ENCODE measurements at regions of chr2 and their contacts with region 1.

Region 1: DNA sequence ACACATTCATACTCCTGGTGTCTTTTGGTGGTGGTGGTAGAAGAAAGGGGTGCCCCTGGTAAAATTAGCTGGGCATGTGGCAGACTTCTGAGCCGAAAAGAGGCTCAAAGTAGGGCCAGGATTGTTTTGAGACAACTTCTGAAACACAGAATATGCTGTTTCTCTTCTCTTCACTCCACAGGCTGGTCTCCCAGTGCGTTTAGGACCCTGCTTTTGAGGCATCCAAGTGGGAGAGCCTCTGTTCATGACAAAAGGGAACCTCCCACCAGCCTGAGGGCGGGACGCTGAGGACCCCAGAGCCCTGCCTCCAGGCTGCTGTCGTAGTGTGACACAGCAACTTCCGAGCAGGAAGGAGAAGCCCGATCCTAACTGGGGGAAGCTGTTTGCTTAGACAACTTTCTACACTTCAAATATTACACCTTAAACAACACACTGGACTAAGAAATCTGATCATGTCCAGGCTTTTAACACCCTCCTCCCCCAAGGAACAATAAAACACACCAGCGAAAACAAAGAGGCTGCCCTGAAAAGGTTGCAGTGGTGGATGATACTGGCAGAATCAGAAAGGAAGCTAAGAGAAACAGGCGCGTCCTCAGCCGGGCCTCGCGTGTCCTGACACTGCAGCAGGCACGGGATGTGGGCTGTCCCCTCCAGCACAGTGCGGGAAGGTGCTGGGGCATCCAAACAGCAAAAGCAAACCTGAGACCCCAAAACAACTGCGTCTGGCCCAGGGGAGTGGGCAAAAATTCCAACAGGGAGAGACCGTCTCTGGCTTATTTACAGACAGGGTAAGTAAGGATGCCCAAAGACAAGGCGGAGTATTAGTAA is 9.3 kb downstream of the SERTAD2 start:
- DNase-seq: peak; percentile 77 to 82 (median 80)
- H3K4me3 ChIP-seq: peak overlapping the region; percentile 46
- H3K27ac ChIP-seq: peak overlapping the region; percentile 53 to 88
- H3K4me1 ChIP-seq: peaks cover 23% of the 10 kb centered on the region
- H3K27me3 ChIP-seq: no peaks in the 10 kb centered on the region
- CTCF ChIP-seq: no peak
- EP300 ChIP-seq: no peak
- POLR2A ChIP-seq: peak; percentile 72

Region 2: GRCh38 chr2:64750817-64751285 is 106.5 kb after region 1 on chr2:
- intact Hi-C with region 1: loop called in 1 of 4 experiments (anchors 2 kb)
- DNase-seq: peak; percentile 99
- H3K4me3 ChIP-seq: peak overlapping the region; percentile 74
- H3K27ac ChIP-seq: peak overlapping the region; percentile 74 to 96
- H3K4me1 ChIP-seq: peaks cover 7% of the 10 kb centered on the region
- H3K27me3 ChIP-seq: no peaks in the 10 kb centered on the region
- CTCF ChIP-seq: no peak
- EP300 ChIP-seq: peak; percentile 7
- POLR2A ChIP-seq: peak; percentile 97

Region 3: DNA sequence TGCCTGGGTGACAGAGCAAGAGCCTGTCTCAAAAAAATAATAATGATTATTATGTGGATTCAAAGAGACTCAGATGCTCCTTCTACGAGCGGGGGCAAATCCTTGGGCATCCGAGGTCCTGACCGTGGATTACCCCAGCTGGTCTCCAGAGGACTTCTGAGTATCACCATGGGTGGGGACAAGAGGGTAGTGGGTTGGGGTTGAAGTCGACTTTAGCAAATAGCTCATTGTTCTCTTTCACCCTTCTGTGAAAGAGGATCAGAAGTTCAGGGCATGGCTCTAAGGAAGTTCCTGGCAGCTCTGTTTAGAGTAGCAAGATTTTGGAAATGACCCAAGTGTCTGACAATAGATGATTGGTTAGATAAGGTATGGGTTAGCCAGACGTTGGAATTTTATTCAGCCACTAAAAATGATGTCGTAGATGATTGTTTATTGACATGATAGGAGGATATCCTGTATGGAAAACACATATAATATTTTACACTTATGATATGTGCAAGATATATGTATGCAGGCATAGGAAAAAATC is 847.1 kb after region 1 on chr2:
- intact Hi-C with region 1: no loop called
- DNase-seq: no peak
- H3K4me3 ChIP-seq: no peak overlapping the region
- H3K27ac ChIP-seq: no peak overlapping the region
- H3K4me1 ChIP-seq: no peaks in the 10 kb centered on the region
- H3K27me3 ChIP-seq: no peaks in the 10 kb centered on the region
- CTCF ChIP-seq: no peak
- EP300 ChIP-seq: no peak
- POLR2A ChIP-seq: no peak

Measured in ovary (tissue), 10 donors.